Ovary (tissue), 10 donors: ENCODE measurements at regions of chr1 and their contacts with region 1.

Region 1: GRCh38 chr1:8238851-8239305 is 79.0 kb upstream of the SLC45A1 start:
- DNase-seq: peak; percentile 36 to 72 (median 52)
- H3K4me3 ChIP-seq: no peak overlapping the region
- H3K27ac ChIP-seq: no peak overlapping the region
- H3K4me1 ChIP-seq: peaks cover 7% of the 10 kb centered on the region
- H3K27me3 ChIP-seq: no peaks in the 10 kb centered on the region
- CTCF ChIP-seq: no peak
- EP300 ChIP-seq: no peak
- POLR2A ChIP-seq: no peak

Region 2: DNA sequence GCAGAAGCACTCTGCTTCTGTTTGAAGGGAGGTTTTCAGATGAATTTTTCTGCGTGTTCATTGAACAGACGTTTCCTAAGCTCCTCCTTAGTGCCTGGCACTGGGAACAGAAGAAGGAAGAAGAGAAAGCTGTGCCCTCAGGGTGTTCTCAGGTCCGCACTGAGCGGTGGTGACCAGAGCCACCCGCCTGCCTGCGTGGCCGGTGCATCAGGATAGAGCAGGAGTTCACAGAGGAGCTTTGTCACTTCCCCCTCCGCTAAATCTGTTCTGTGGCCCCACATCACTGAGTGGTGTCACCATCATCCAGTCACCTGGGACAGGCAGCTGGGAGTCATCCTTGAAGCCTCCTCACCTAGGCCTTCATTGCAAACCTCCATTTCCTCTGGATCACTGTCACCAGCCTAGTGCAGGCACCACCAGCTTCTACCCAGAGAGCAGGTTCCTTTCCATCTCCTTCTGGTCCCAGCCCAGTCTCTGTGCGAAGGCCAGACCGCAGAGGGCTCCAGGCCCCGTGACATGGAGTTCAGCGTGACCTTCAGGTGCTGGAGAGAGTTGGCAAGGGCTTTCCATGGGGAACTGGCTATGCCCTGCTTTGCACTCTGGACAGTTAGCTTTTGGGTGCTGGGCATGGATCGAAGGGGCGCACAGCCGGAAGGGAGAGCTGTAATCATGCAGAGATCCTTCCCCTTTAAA is 255.6 kb before region 1 on chr1:
- intact Hi-C with region 1: loop called in 1 of 4 experiments (anchors 5 kb)
- DNase-seq: no peak
- H3K4me3 ChIP-seq: no peak overlapping the region
- H3K27ac ChIP-seq: no peak overlapping the region
- H3K4me1 ChIP-seq: peaks cover 1% of the 10 kb centered on the region
- H3K27me3 ChIP-seq: no peaks in the 10 kb centered on the region
- CTCF ChIP-seq: no peak
- EP300 ChIP-seq: no peak
- POLR2A ChIP-seq: no peak

Region 3: DNA sequence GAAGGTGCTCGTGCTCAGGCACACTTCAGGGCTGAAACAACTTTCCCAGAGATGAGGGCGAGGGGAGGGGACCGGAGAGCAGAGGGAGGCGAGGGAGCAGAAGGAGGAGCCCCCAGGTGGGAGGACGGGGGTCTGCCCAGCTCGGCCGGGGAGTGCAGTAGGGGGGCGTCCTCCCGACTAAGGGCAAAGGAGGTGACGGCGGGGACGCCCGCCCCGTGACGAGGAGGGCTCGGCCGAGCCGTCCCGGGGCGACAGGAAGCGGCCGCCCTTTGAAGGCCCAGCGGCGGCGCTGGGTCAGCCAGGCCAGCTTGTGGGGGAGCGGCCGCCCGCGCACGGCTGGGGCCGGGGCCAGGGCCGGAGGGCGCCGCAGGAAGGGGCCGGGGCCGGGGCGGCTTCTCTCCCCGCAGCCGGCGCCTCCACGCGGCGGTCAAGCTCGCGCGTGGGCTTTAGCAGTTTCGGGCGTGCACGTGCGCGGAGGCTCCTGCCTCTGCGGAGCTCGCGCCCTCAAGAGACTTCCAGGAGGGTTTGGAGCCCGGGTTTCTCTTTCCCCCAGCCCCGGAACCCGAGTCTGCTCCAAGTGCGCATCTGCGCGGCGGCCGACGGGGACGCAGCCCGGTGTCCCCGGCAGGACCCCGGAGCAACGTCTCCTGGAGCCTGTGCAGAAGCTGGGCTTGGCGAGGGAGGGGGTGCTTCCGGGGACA is 21.7 kb before region 1 on chr1:
- intact Hi-C with region 1: no loop called
- DNase-seq: peak; percentile 56 to 77 (median 62)
- H3K4me3 ChIP-seq: peak overlapping the region; percentile 35
- H3K27ac ChIP-seq: peak overlapping the region; percentile 58 to 77
- H3K4me1 ChIP-seq: peaks cover 6% of the 10 kb centered on the region
- H3K27me3 ChIP-seq: no peaks in the 10 kb centered on the region
- CTCF ChIP-seq: peak in 2 of 3 donors; percentile 9 to 16
- EP300 ChIP-seq: no peak
- POLR2A ChIP-seq: no peak

Region 4: DNA sequence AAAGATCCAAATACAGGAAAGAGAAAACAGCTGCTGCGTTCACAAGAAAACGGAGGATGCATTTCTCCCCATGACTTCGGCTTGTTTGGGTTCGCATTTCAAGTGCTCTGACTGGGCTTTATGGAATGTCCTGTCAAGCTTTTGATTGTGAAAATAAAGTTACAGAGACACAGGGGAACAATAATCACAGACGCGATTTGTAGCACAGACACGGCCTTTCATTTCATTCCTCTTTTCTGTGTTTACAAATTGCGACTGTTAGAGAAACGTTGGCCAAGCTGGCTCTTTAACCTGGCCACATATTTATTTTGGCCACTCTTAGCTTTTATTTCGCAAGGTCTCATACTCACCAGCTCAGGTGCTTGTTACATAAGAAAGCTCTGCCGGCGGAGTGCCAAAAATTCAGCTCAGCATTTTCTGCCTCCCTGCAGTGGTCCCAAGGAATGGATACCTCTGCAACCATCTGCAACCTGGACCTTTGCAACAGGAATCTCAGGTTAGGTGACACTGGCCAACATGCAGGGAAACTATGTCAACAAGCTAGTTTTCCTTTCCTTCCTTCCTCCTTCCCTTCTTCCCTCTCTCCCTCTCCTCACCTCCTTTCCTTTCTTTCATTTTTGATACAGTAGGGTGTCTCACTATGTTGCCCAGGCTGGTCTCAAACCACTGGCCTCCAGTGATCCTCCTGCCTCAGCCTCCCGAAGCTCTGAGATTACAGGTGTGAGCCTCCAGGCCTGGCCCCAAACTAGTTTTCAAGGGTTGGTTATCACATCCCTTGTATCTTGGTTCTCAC is 20.8 kb after region 1 on chr1:
- intact Hi-C with region 1: no loop called
- DNase-seq: peak; percentile 39 to 62 (median 53)
- H3K4me3 ChIP-seq: no peak overlapping the region
- H3K27ac ChIP-seq: no peak overlapping the region
- H3K4me1 ChIP-seq: peaks cover 3% of the 10 kb centered on the region
- H3K27me3 ChIP-seq: no peaks in the 10 kb centered on the region
- CTCF ChIP-seq: no peak
- EP300 ChIP-seq: no peak
- POLR2A ChIP-seq: no peak